ENCODE measurements at regions of chr11 and their contacts with region 1.

Region 1: GRCh38 chr11:68780829-68781228 is 29.5 kb upstream of the TESMIN start:
- DNase-seq: peak; percentile 51 to 74
- ATAC-seq: peak; percentile 44 to 79 (median 74)
- H3K4me3 ChIP-seq: no peak overlapping the region
- H3K27ac ChIP-seq: peak overlapping the region in 5 of 10 donors; percentile 13 to 27 (median 22)
- H3K4me1 ChIP-seq: peaks cover 0 to 44% (median 16%) of the 10 kb centered on the region in 9 donors
- H3K27me3 ChIP-seq: no peaks in the 10 kb centered on the region
- CTCF ChIP-seq: no peak

Region 2: GRCh38 chr11:68436985-68437926 is 343.6 kb before region 1 on chr11:
- intact Hi-C with region 1: no loop called
- DNase-seq: peak; percentile 61 to 69
- ATAC-seq: peak; percentile 67 to 91 (median 83)
- H3K4me3 ChIP-seq: peak overlapping the region in 1 of 10 donors; percentile 8
- H3K27ac ChIP-seq: peak overlapping the region in 9 of 10 donors; percentile 64 to 81 (median 76)
- H3K4me1 ChIP-seq: peaks cover 7 to 36% (median 24%) of the 10 kb centered on the region in 9 donors
- H3K27me3 ChIP-seq: no peaks in the 10 kb centered on the region
- CTCF ChIP-seq: peak in 6 of 9 donors; percentile 30 to 53 (median 38)

Region 3: GRCh38 chr11:68684385-68685356 is 96.2 kb before region 1 on chr11 and contains the start of gene GAL:
- intact Hi-C with region 1: no loop called
- DNase-seq: no peak
- ATAC-seq: peak in 2 of 8 donors; percentile 36 to 61
- H3K4me3 ChIP-seq: peak within 1 kb of the TSS; percentile 10 to 47 (median 33)
- H3K27ac ChIP-seq: no peak within 1 kb of the TSS
- H3K4me1 ChIP-seq: peaks cover 2 to 12% (median 9%) of the 10 kb centered on the region in 9 donors
- H3K27me3 ChIP-seq: peaks cover 16 to 73% (median 61%) of the 10 kb centered on the region in 7 donors
- CTCF ChIP-seq: no peak
- total RNA-seq, gene GAL: 0.42 to 1.6 (median 0.61) TPM in 3 of 10 donors, not detected in the others

Region 4: GRCh38 chr11:68855205-68855981 is 74.6 kb after region 1 on chr11:
- intact Hi-C with region 1: loop called in 1 of 10 experiments (anchors 10 kb)
- DNase-seq: peak; percentile 60 to 88
- ATAC-seq: peak; percentile 76 to 98 (median 88)
- H3K4me3 ChIP-seq: peak overlapping the region; percentile 33 to 66 (median 60)
- H3K27ac ChIP-seq: peak overlapping the region in 9 of 10 donors; percentile 12 to 82 (median 70)
- H3K4me1 ChIP-seq: peaks cover 5 to 28% (median 12%) of the 10 kb centered on the region in 9 donors
- H3K27me3 ChIP-seq: peaks cover 0 to 22% (median 5%) of the 10 kb centered on the region in 7 donors
- CTCF ChIP-seq: peak in 4 of 9 donors; percentile 21 to 66 (median 54)

Region 5: GRCh38 chr11:68927280-68928135 is 146.7 kb after region 1 on chr11:
- intact Hi-C with region 1: no loop called
- DNase-seq: no peak
- ATAC-seq: peak in 7 of 8 donors; percentile 4 to 59 (median 49)
- H3K4me3 ChIP-seq: no peak overlapping the region
- H3K27ac ChIP-seq: peak overlapping the region in 9 of 10 donors; percentile 28 to 82 (median 49)
- H3K4me1 ChIP-seq: peaks cover 13 to 40% (median 30%) of the 10 kb centered on the region in 9 donors
- H3K27me3 ChIP-seq: no peaks in the 10 kb centered on the region
- CTCF ChIP-seq: no peak

Measured in heart right ventricle (tissue), 16 donors.